Cardiac septum (tissue), 1 donor: ENCODE measurements at regions of chr19 and their contacts with region 1.

Region 1: GRCh38 chr19:31349160-31349881 is at the start of gene TSHZ3:
- DNase-seq: peak; percentile 89
- total RNA-seq, gene TSHZ3: 5.2 TPM

Region 2: DNA sequence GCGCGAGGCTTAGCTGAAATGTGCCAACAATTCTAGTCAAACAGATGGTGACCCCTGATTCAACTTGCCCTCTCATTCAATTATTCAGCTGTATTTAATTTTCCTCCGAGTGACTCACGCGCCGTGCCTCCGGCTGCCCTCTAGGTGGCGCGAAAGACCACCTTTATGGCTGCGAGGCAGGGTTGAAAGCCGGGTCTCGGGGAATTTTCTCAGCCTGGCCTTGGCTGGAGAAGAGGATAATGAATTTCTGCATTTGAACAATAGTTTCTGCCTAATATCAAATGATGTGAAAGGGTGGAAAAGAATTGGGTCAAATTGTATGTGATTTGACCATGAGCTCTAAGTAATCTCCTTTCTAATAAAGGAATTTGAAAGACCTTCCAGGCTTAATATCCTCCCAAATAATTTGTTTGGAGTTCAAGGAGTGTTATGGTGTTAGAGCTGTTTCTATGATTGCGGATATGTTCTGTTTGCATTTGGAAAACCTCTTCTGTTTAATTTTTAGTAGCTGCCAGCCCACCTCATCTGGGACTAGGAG is 666.3 kb before region 1 on chr19:
- intact Hi-C with region 1: loop called (anchors 10 kb)
- DNase-seq: peak; percentile 81

Region 3: GRCh38 chr19:31312009-31312676 is 37.2 kb before region 1 on chr19:
- intact Hi-C with region 1: loop called (anchors 2 kb)
- DNase-seq: no peak